ENCODE measurements at regions of chr2 and their contacts with region 1.

Region 1: DNA sequence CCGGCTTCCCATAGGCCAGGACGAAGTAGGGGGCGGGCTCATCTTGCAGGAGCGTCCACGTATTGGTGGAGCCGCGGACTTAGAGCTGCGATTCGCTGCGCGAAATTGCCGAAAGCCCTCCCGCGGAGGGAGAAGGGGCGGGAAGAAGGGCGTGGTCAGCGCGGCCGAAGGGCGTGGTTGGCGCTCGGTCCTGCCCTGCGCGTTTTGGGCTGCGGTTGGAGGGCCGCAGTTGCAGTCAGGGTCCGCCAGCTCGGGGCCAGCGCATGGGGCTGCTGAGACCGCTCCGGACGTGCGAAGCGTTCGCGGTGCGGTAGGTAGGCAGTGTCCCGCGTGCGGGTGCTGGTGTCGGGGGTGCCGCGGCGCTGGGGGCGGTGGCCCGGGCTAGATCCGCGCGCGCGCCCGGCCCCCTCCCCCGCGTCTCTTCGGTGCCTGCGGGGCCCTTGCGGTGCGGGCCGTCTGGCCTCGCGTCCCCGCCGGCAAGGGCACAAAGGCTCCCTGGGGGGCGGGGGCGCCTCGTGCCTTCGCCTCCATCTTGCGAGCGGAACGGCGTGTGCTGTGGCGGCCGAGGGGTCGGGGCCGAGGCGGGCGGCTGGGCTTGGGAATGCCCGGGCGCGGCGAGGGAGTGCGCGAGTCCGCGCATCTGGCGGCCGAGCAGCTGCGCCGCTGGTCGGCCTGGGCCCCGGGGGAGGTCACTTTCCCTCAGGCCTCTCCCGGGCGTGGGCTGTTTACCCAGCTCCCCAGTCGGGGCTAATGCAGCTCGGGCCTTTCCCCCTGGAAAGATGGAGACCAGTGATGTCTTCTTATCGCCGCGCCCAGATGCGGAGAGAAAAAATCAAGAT is at the start of gene CEP68:
- DNase-seq: peak; percentile 92 to 99 (median 97)

Region 2: GRCh38 chr2:64988420-64989125 is 67.9 kb before region 1 on chr2:
- intact Hi-C with region 1: loop called (anchors 10 kb)
- DNase-seq: peak in 39 of 42 donors; percentile 20 to 76 (median 56)

Region 3: GRCh38 chr2:65129826-65130663 is 73.6 kb after region 1 on chr2 and contains the start of gene RAB1A:
- intact Hi-C with region 1: loop called (anchors 2 kb)
- DNase-seq: peak; percentile 98 to 100 (median 99)

Region 4: GRCh38 chr2:65227425-65228262 is 171.2 kb after region 1 on chr2 and contains the start of gene ACTR2:
- intact Hi-C with region 1: loop called (anchors 10 kb)
- DNase-seq: peak; percentile 93 to 98 (median 97)